K562 (cell line): ENCODE measurements at regions of chr10 and their contacts with region 1.

Region 1: DNA sequence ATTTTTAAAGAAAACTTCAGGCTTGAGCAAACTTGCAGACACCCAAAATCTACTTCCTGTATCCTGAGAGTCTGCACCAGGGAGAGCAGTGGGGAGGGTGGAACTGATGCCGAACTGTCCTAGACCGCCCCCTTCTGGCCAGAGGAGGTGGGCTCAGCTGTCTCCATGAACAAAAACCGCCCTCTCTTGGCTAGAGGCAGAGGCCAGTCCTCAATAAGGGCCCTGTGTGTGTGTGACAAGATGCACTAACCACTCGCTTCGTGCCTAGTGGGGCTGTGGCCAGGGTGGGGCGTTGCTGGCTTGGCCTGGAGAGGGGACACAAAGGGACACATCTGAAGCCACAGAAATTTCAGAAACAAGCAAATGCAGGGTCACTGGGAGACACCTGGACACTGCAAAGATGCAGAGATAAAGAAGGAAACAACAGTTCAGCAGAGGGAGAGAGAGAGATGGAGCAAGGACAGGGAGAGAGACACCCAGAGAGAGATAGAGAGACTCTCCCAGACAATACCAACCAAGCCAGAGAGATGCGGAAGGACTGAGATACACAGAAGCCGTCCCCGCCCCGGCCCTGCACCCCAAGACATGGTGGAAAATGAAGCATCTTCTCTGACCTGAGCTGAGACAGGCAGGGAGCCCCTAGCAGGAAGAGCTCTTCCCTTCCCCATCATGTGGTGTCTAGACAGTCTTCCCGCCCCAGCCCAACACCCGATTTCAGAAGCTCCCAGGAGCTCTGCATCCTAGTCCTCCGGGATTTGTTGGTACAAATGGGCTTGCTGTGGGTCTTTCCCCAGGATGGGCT is 22.7 kb upstream of the FXYD4 start:
- DNase-seq: peak; percentile 92 to 95 (median 94)
- ATAC-seq: peak; percentile 99
- H3K4me3 ChIP-seq: no peak overlapping the region
- H3K27ac ChIP-seq: no peak overlapping the region
- H3K4me1 ChIP-seq: peaks cover 0 to 6% of the 10 kb centered on the region in 2 experiments; a peak in 2 of 5 replicates
- H3K27me3 ChIP-seq: peaks cover 15 to 27% of the 10 kb centered on the region in 2 experiments; a peak in 4 of 5 replicates
- CTCF ChIP-seq: peak; percentile 98 to 99 (median 99)
- EP300 ChIP-seq: no peak
- POLR2A ChIP-seq: no peak
- RAD21 ChIP-seq: peak; percentile 96 to 97

Region 2: GRCh38 chr10:43138021-43138756 is 210.5 kb before region 1 on chr10 and contains the start of gene CSGALNACT2:
- CTCF ChIA-PET with region 1: no interaction called
- POLR2A ChIA-PET with region 1: no interaction called
- in situ Hi-C with region 1: no loop called
- intact Hi-C with region 1: loop called (anchors 10 kb)
- DNase-seq: peak; percentile 87 to 92 (median 89)
- ATAC-seq: peak; percentile 97
- H3K4me3 ChIP-seq: peak within 1 kb of the TSS; percentile 87
- H3K27ac ChIP-seq: peak within 1 kb of the TSS; percentile 32; the same call in 2 of the 3 replicates
- H3K4me1 ChIP-seq: peaks cover 9 to 25% of the 10 kb centered on the region in 2 experiments; a peak in 4 of 5 replicates
- H3K27me3 ChIP-seq: peaks cover 0 to 4% of the 10 kb centered on the region in 2 experiments; a peak in 2 of 5 replicates
- CTCF ChIP-seq: 0 out of 6 replicates have a peak, but pooled peaks of 1 of the 3 experiments have one; percentile 4
- EP300 ChIP-seq: no peak
- POLR2A ChIP-seq: peak; percentile 59; the same call in 1 of the 2 replicates
- RAD21 ChIP-seq: no peak
- polyA plus RNA-seq, gene CSGALNACT2: 1.4 to 1.9 TPM

Region 3: GRCh38 chr10:43273543-43273942 is 75.2 kb before region 1 on chr10:
- CTCF ChIA-PET with region 1: no interaction called
- POLR2A ChIA-PET with region 1: no interaction called
- in situ Hi-C with region 1: no loop called
- intact Hi-C with region 1: no loop called
- DNase-seq: no peak
- ATAC-seq: peak; percentile 55
- H3K4me3 ChIP-seq: no peak overlapping the region
- H3K27ac ChIP-seq: no peak overlapping the region
- H3K4me1 ChIP-seq: no peaks in the 10 kb centered on the region
- H3K27me3 ChIP-seq: peaks cover 13 to 16% of the 10 kb centered on the region in 2 experiments
- CTCF ChIP-seq: no peak
- EP300 ChIP-seq: no peak
- POLR2A ChIP-seq: no peak
- RAD21 ChIP-seq: no peak

Region 4: DNA sequence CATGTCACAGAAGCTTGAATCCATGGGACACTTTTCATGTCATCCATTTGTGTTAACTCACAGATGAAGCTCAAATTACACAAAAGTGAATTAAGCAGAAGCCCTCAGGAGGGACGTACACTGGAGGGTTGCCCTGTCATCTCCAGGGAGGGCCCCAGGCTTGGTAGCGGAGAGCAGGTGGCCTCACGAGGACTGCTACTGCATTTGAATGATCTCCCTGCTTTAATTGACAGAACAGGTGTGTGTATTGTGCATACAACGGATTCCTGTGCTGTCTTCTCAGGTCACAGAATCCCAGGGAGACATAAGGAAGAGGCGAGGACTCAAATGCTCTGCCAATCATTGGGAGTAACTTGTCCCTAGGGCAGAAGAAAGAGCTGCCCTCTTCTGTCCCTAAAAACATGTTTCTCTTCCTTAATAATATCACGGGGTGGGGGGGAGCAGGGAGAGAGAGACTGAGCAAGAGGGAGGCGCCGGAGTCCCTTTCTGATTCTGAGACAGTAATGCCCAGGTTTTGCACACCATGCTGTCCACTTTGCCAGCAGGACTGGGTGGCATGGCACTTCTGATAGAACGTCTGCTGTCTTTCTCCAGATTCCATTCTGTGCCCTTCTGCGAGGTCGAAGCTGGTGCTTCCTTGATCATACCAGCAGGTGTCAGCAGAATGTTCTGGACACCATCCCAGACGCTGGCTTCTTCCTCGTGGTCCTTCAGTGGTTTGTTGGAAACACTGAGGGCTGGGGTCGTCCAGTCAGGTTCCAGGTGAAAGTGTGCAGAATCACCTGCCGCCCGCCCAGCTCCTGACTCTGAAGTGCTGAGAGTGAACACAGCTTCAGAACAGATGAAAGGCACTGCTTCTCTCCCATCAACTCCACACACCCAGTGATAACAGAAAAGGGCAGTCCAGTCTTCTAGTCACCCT is 55.7 kb before region 1 on chr10:
- CTCF ChIA-PET with region 1: interaction called, 15 read pairs
- POLR2A ChIA-PET with region 1: interaction called, 6 read pairs
- in situ Hi-C with region 1: loop called (anchors 5 kb)
- intact Hi-C with region 1: loop called (anchors 1 kb)
- DNase-seq: peak; percentile 47 to 68 (median 54)
- ATAC-seq: peak; percentile 91
- H3K4me3 ChIP-seq: no peak overlapping the region
- H3K27ac ChIP-seq: no peak overlapping the region
- H3K4me1 ChIP-seq: peaks cover 0 to under 1% of the 10 kb centered on the region in 2 experiments; a peak in 1 of 5 replicates
- H3K27me3 ChIP-seq: peaks cover 2 to 32% of the 10 kb centered on the region in 2 experiments; a peak in 4 of 5 replicates
- CTCF ChIP-seq: peak; percentile 76 to 87 (median 84)
- EP300 ChIP-seq: no peak
- POLR2A ChIP-seq: no peak
- RAD21 ChIP-seq: peak; percentile 85 to 93

Region 5: GRCh38 chr10:43314626-43315495 is 33.9 kb before region 1 on chr10:
- CTCF ChIA-PET with region 1: no interaction called
- POLR2A ChIA-PET with region 1: no interaction called
- in situ Hi-C with region 1: no loop called
- intact Hi-C with region 1: loop called (anchors 5 kb)
- DNase-seq: no peak
- ATAC-seq: no peak; the same call in 2 of the 3 replicates
- H3K4me3 ChIP-seq: no peak overlapping the region
- H3K27ac ChIP-seq: no peak overlapping the region
- H3K4me1 ChIP-seq: peaks cover 0 to 3% of the 10 kb centered on the region in 2 experiments; a peak in 1 of 5 replicates
- H3K27me3 ChIP-seq: peaks cover 38 to 77% of the 10 kb centered on the region in 2 experiments
- CTCF ChIP-seq: no peak
- EP300 ChIP-seq: no peak
- POLR2A ChIP-seq: no peak
- RAD21 ChIP-seq: no peak

Region 6: DNA sequence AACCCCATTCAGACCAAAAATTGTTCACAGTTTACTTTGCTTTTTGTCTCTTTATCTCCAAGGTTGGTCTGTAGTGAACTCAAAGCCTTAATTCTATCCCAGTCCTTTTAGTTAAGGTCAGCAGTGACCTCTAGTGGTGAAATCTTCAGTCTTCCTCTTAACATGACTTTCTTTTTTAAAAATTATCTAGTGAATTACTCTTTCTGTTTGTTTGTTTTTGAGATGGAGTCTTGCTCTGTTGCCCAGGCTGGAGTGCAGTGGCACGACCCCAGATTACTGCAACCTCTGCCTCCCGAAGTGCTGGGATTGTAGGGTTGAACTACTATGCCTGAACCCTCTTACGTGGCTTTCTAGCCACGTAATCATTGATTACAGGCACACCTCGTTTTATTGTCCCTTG is 113.2 kb after region 1 on chr10:
- CTCF ChIA-PET with region 1: interaction called, 6 read pairs
- POLR2A ChIA-PET with region 1: no interaction called
- in situ Hi-C with region 1: no loop called
- intact Hi-C with region 1: loop called (anchors 2 kb)
- DNase-seq: peak; percentile 62 to 91 (median 64)
- ATAC-seq: peak; percentile 94
- H3K4me3 ChIP-seq: no peak overlapping the region
- H3K27ac ChIP-seq: no peak overlapping the region
- H3K4me1 ChIP-seq: no peaks in the 10 kb centered on the region; a peak in 1 of 5 replicates
- H3K27me3 ChIP-seq: peaks cover 4 to 5% of the 10 kb centered on the region in 2 experiments; a peak in 2 of 5 replicates
- CTCF ChIP-seq: peak; percentile 68 to 95 (median 77); a peak in 5 of 6 replicates
- EP300 ChIP-seq: no peak
- POLR2A ChIP-seq: no peak
- RAD21 ChIP-seq: peak; percentile 91 to 97